ENCODE measurements at regions of chr6 and their contacts with region 1.

Region 1: GRCh38 chr6:50848989-50849795 is 30.5 kb downstream of the TFAP2B start:
- DNase-seq: no peak
- H3K4me3 Mint-ChIP-seq: no peak overlapping the region
- H3K27ac Mint-ChIP-seq: no peak overlapping the region
- H3K4me1 Mint-ChIP-seq: no peaks in the 10 kb centered on the region
- H3K27me3 Mint-ChIP-seq: peaks cover 77% of the 10 kb centered on the region

Region 2: GRCh38 chr6:50716899-50717509 is 132.2 kb before region 1 on chr6:
- intact Hi-C with region 1: loop called (anchors 2 kb)
- DNase-seq: no peak
- H3K4me3 Mint-ChIP-seq: no peak overlapping the region
- H3K27ac Mint-ChIP-seq: no peak overlapping the region
- H3K4me1 Mint-ChIP-seq: peaks cover 2% of the 10 kb centered on the region
- H3K27me3 Mint-ChIP-seq: peaks cover 75% of the 10 kb centered on the region

Measured in activated CD4-positive, alpha-beta T cell treated with anti-CD3 and anti-CD28 coated beads, Interleukin-2, amount 10 ng/mL, durations not matched to agents 24 days and 14 days (primary cell).